Upper lobe of right lung (tissue), 1 donor: ENCODE measurements at regions of chr17 and their contacts with region 1.

Region 1: DNA sequence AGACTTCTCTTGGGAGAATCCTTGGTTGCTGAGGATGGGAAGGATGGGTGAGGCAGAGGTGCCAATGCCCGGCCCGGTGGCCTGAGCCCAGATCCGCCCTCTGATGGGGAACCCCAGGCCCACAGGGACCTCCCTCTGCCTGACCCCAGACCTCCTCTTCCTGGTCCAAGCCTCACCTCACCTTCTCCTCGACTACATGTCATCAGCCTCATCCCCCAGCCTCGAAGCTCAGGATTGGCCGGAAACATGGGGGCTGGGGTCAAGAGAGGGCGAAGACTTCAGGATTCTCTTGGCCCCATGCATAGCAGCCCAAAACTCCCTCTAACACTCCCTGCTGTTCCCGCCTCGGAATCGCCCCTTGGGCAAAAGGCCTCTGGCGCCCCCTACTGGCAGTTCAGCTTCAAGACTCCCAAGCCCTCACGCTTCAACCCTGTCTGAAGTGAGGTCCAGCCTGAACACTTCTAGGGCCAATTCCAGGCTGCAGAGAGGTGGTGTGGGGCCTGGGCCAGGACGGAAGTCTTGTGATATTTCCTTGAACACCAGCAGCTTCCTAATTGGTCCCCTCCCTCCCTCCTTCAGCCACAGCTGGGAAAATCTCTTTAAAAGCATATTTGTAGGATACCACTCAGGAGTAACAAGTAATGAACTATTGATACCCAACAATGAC is 47.2 kb downstream of the ARHGAP27 start:
- DNase-seq: peak; percentile 94
- ATAC-seq: peak; percentile 97
- H3K4me3 ChIP-seq: no peak overlapping the region
- H3K27ac ChIP-seq: no peak overlapping the region
- H3K4me1 ChIP-seq: peaks cover 5% of the 10 kb centered on the region
- H3K27me3 ChIP-seq: no peaks in the 10 kb centered on the region
- CTCF ChIP-seq: peak; percentile 98

Region 2: GRCh38 chr17:45221066-45221996 is 164.1 kb before region 1 on chr17 and contains the start of gene FMNL1:
- intact Hi-C with region 1: loop called (anchors 5 kb)
- DNase-seq: peak; percentile 87
- ATAC-seq: peak; percentile 64
- H3K4me3 ChIP-seq: peak within 1 kb of the TSS; percentile 64
- H3K27ac ChIP-seq: peak within 1 kb of the TSS; percentile 70
- H3K4me1 ChIP-seq: peaks cover 9% of the 10 kb centered on the region
- H3K27me3 ChIP-seq: no peaks in the 10 kb centered on the region
- CTCF ChIP-seq: no peak
- total RNA-seq, gene FMNL1: 62.3 TPM

Region 3: GRCh38 chr17:45270828-45271418 is 114.5 kb before region 1 on chr17:
- intact Hi-C with region 1: loop called (anchors 5 kb)
- DNase-seq: peak; percentile 68
- ATAC-seq: peak; percentile 61
- H3K4me3 ChIP-seq: no peak overlapping the region
- H3K27ac ChIP-seq: no peak overlapping the region
- H3K4me1 ChIP-seq: no peaks in the 10 kb centered on the region
- H3K27me3 ChIP-seq: no peaks in the 10 kb centered on the region
- CTCF ChIP-seq: peak; percentile 49

Region 4: DNA sequence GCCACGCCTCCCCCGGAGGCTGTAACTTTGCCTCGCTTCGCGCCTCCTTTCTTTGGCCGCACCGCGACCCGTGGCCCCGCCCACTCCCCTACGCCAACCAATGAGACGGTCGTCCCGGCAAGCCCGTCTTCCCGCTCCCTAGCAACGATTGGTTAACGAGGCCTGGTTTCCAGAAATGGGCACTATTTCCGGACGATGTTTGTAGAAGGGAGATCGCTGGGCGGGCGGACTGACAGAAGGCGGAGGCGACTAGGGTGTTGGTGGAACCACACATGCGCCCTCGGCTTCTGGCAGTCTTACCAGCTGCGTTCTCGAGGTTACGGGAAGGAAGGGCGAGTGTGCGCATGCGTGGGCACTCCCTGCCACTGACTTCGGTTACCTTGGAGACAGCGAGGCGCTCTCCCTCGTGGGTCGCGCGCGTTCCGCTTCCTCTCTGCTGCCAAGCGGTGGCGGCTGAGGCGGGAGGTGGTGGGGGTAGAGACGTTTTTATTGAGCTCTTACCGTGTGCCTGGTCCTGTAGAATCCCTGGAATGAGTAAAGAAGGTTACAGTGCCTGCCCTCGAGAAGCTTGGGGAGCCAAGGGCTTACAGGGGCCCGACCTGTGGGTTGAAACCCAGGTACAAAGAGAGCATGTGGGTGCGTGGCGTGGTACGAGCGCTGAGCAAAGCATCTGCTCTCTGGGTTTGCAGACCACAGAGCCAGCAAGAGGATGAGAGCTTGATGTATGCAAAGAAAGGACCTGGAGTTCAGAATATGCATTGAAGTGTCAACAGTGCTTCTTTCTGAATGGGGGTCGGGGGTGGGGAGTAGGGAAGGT is 68.1 kb before region 1 on chr17:
- intact Hi-C with region 1: no loop called
- DNase-seq: peak; percentile 100
- ATAC-seq: peak; percentile 95
- H3K4me3 ChIP-seq: peak overlapping the region; percentile 91
- H3K27ac ChIP-seq: peak overlapping the region; percentile 94
- H3K4me1 ChIP-seq: peaks cover 55% of the 10 kb centered on the region
- H3K27me3 ChIP-seq: no peaks in the 10 kb centered on the region
- CTCF ChIP-seq: no peak